ENCODE measurements at regions of chr5 and their contacts with region 1.

Region 1: DNA sequence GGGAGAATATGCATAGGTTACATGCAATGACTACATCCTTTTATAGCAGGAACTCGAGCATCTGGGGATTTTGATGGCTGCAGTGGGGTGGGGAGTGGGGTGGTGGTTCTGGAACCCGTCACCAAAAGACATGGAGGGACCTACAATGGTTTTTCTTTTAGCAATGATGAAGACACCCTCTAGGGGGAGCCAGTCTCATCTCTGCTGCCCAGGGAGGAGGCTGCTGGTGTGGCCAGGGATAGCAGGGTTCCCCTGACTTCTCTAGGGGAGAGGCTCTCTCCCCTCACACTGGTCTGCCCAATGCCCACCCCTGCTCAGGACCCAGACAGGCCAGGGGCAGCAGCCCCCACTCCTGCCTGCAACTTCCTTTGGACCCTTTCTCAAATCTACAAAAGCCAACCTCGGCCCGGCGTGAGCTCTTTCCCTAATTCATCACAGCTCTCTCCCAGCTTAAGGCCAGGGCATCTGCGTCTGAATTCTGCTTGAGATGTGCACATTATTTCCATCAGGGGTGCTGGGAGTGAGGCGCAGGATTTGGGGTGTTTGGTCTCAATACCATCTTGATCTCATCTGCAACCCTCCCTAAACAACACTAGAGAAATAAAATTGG is 73.6 kb upstream of the RETREG1 start:
- DNase-seq: peak; percentile 54 to 88
- ATAC-seq: peak; percentile 94 to 96
- H3K4me3 ChIP-seq: no peak overlapping the region
- H3K27ac ChIP-seq: no peak overlapping the region
- H3K4me1 ChIP-seq: no peaks in the 10 kb centered on the region
- CTCF ChIP-seq: peak; percentile 69
- EP300 ChIP-seq: no peak
- POLR2A ChIP-seq: no peak
- RAD21 ChIP-seq: peak; percentile 51 to 66

Region 2: GRCh38 chr5:16666883-16667398 is 23.4 kb before region 1 on chr5:
- CTCF ChIA-PET with region 1: interaction called, 17 read pairs
- POLR2A ChIA-PET with region 1: no interaction called
- DNase-seq: no peak
- ATAC-seq: peak; percentile 49 to 50; a peak in 3 of 6 replicates
- H3K4me3 ChIP-seq: no peak overlapping the region
- H3K27ac ChIP-seq: no peak overlapping the region
- H3K4me1 ChIP-seq: no peaks in the 10 kb centered on the region
- CTCF ChIP-seq: peak; percentile 39
- EP300 ChIP-seq: no peak
- POLR2A ChIP-seq: no peak
- RAD21 ChIP-seq: peak; percentile 41 to 50; a peak in 4 of 5 replicates

Region 3: DNA sequence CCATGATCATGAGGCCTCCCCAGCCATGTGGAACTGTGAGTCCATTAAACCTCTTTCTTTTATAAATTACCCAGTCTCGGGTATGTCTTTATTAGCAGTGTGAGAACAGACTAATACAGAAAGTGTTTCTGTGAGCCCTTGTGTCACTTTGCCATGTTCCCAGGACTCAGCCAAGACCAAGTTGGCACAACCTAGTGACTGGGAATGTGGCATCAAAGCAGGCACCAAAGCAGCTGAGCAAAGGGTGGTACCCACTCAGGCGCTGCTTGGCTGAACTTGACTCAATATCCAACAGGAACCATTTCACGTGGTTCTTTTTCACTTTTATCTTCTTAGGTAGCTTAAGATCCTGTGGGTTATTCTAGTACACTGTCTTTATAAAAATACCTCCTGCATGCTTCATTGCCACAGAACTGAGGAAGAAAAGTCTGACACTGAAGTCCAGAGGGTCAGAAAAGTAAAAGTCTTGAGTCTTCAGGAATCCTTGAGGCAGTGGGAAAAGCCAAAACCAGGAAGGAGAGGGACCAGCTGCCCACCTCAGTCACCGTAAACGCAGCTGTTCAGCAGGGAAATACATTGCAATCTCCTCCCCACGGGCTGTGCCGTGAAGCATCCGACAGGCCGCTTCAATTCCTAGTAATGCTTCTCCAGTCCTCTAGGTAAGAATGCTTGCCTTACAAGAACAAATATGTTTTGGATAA is 17.0 kb after region 1 on chr5:
- CTCF ChIA-PET with region 1: interaction called, 24 read pairs
- POLR2A ChIA-PET with region 1: no interaction called
- DNase-seq: no peak
- ATAC-seq: no peak
- H3K4me3 ChIP-seq: no peak overlapping the region
- H3K27ac ChIP-seq: no peak overlapping the region
- H3K4me1 ChIP-seq: no peaks in the 10 kb centered on the region
- CTCF ChIP-seq: no peak
- EP300 ChIP-seq: no peak
- POLR2A ChIP-seq: no peak
- RAD21 ChIP-seq: no peak

Region 4: DNA sequence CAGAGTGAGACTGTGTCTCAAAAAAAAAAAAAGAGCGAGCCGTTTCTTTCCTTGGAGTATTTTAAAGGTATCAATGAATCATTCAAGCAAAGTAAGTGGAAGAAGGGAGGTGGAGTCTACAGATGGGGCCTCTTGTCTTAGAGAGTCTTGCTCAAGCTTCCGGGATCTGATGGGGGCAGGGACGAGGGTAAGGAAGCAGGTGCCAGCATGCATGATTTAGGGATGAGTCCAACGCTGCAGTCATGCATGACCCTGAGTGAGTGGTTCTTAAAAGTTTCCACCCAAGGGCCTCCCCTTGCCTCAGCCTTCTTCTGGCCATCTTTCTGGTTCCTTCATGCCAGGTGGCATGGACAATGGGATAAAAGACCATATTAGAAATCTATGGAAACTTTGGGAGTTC is 166.2 kb after region 1 on chr5:
- CTCF ChIA-PET with region 1: no interaction called
- POLR2A ChIA-PET with region 1: no interaction called
- DNase-seq: peak in 1 of 2 experiments; percentile 36
- ATAC-seq: peak; percentile 44 to 73
- H3K4me3 ChIP-seq: no peak overlapping the region
- H3K27ac ChIP-seq: peak overlapping the region in 1 of 2 experiments; percentile 45; a peak in 2 of 6 replicates
- H3K4me1 ChIP-seq: peaks cover 55% of the 10 kb centered on the region
- CTCF ChIP-seq: no peak
- EP300 ChIP-seq: no peak
- POLR2A ChIP-seq: no peak
- RAD21 ChIP-seq: no peak

Measured in A549 (cell line).